ENCODE measurements at regions of chr11 and their contacts with region 1.

Region 1: GRCh38 chr11:131064373-131064991 is 148.2 kb upstream of the SNX19 start:
- H3K4me3 ChIP-seq: no peak overlapping the region
- H3K27ac ChIP-seq: no peak overlapping the region
- H3K4me1 ChIP-seq: no peaks in the 10 kb centered on the region
- CTCF ChIP-seq: no peak

Region 2: GRCh38 chr11:130913268-130913667 is 151.2 kb before region 1 on chr11:
- CTCF ChIA-PET with region 1: no interaction called
- POLR2A ChIA-PET with region 1: no interaction called
- H3K4me3 ChIP-seq: no peak overlapping the region
- H3K27ac ChIP-seq: no peak overlapping the region
- H3K4me1 ChIP-seq: no peaks in the 10 kb centered on the region
- CTCF ChIP-seq: no peak

Region 3: DNA sequence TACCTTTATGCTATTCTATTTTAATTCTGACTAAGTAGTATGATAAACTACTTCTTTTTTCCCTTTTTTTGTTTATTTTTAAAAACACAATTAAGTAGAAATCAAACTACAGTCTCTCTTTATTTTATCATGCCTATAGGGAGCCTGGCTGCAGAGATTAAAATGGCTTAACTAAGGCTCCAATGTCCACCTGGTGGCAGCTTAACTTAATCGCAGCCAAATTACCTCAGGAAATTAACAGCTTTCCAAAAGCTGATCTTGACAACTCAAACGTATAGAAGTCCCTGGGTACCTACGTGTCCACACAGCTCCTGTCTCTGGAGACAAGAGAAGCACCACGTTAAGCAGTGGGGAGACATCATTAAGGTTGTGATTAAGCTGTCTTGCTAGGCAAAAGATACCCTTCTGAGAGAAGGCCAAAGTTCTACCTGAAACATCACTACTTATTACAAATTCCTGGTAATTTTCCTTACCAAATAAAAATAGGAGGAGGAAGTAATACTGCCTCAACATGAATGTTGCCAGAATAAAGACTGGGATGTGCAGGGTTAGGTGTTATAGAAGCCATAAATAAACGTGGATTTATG is 85.0 kb before region 1 on chr11:
- CTCF ChIA-PET with region 1: no interaction called
- POLR2A ChIA-PET with region 1: no interaction called
- H3K4me3 ChIP-seq: no peak overlapping the region
- H3K27ac ChIP-seq: no peak overlapping the region
- H3K4me1 ChIP-seq: no peaks in the 10 kb centered on the region
- CTCF ChIP-seq: no peak

Region 4: GRCh38 chr11:131079036-131079435 is 14.6 kb after region 1 on chr11:
- CTCF ChIA-PET with region 1: interaction called, 12 read pairs
- POLR2A ChIA-PET with region 1: no interaction called
- H3K4me3 ChIP-seq: no peak overlapping the region
- H3K27ac ChIP-seq: no peak overlapping the region
- H3K4me1 ChIP-seq: no peaks in the 10 kb centered on the region
- CTCF ChIP-seq: no peak

Region 5: DNA sequence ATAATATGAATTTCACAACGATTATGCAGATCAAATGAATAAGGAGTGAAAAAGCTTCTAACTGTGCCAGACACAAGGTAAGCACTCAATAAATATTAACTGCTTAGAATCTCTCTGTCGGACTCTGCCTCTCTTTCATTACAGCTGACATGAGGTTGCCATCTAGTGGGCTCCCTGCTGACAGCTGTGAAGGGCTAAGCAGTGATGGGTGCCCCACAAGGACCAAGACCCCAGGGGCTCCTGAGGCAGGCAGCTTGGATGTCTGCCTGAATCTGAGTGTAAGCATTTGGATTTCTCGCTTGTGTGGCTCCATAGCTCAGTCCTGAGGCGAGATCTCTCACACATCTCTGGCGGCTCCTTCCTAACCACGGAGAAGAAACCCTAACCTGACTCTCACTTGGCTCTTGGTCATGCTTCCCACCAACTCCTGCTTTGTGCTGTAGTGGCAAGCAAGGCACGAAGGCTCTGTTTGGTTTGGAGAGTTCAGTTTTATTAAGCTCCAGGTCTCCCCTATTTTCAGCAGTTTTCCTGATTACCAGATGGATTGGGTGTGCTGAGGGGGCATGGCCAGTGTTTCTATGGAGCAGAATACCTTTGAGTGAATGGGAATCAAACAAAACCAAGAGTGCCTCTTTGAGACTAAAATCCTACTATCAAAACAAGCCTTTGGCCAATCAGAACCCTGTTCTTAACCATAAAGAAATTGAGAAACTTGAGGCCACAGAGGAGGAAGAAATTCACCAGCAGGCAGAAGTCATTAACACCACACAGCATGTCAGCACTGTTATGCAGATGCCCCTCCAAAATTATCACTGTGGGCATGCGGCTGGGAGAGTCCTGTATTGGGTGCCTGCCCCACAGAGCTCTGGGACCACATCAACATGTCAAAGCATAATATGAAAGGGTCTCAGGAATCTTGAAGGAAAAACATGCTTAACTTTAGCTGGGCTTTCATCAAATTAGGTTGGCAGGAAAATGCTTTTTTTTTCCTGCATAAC is 153.1 kb after region 1 on chr11:
- CTCF ChIA-PET with region 1: interaction called, 21 read pairs
- POLR2A ChIA-PET with region 1: no interaction called
- H3K4me3 ChIP-seq: no peak overlapping the region
- H3K27ac ChIP-seq: no peak overlapping the region
- H3K4me1 ChIP-seq: no peaks in the 10 kb centered on the region
- CTCF ChIP-seq: no peak

Region 6: DNA sequence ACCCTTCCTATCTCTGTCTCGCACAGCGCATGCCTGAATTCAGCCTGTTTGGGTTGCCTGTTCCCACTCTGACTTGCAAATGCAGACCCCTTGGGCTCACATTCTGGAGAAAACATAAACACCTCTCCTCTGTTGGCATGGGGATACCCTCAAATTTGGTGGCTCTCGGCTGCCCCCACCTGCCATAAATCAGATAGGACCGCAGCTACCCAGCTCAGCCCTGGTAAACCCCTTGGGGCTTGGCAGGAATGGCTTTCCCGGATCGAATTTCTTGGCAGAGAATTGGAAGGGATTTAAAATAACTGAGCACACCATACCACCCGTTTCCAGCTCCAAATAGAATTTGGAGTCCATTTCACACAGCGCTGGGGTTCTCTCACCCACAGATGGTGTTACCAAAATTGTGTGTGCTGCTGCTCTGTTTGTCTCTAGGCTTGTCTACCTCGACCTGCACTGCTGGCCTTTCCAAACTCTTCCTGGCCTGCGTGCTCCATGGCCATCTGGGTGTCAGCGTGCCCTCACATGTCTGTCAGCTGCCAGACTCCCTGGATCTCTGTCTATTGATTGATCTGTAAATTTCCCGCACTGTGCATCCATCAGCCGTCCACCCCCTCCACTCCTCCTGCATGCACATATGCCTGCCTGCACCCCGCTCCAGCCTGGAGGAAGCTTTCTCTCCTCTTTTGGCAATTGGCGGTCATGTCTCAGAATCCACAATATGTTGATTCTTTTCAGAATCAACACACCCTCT is 439.9 kb after region 1 on chr11:
- CTCF ChIA-PET with region 1: interaction called, 10 read pairs
- POLR2A ChIA-PET with region 1: no interaction called
- H3K4me3 ChIP-seq: no peak overlapping the region
- H3K27ac ChIP-seq: no peak overlapping the region
- H3K4me1 ChIP-seq: no peaks in the 10 kb centered on the region
- CTCF ChIP-seq: no peak

Region 7: DNA sequence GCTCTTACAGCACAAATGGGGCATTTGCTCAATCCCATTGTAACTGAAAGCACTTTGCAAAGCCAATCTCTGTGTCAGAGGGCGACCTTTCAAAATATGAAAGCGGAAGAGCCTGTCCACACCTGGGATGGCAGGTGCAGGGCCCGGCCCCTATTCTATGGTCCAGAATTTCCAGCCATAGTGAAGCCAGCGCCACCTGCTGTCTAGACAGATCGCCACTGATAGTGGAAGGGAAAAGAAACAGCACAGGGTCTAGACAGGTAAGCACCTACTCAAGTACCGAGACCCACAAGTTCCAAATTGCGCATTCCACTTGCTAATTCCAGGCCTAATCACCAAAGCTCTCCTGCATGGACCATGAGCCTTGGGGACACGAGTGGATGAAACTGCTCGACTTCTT is 447.3 kb after region 1 on chr11:
- CTCF ChIA-PET with region 1: interaction called, 46 read pairs
- POLR2A ChIA-PET with region 1: no interaction called
- H3K4me3 ChIP-seq: no peak overlapping the region
- H3K27ac ChIP-seq: no peak overlapping the region
- H3K4me1 ChIP-seq: no peaks in the 10 kb centered on the region
- CTCF ChIP-seq: no peak

Region 8: GRCh38 chr11:131579932-131580387 is 515.5 kb after region 1 on chr11:
- CTCF ChIA-PET with region 1: interaction called, 10 read pairs
- POLR2A ChIA-PET with region 1: no interaction called
- H3K4me3 ChIP-seq: no peak overlapping the region
- H3K27ac ChIP-seq: no peak overlapping the region
- H3K4me1 ChIP-seq: no peaks in the 10 kb centered on the region
- CTCF ChIP-seq: no peak

Region 9: GRCh38 chr11:131674051-131674755 is 609.7 kb after region 1 on chr11:
- CTCF ChIA-PET with region 1: interaction called, 54 read pairs
- POLR2A ChIA-PET with region 1: no interaction called
- H3K4me3 ChIP-seq: no peak overlapping the region
- H3K27ac ChIP-seq: no peak overlapping the region
- H3K4me1 ChIP-seq: no peaks in the 10 kb centered on the region
- CTCF ChIP-seq: peak; percentile 64